Right cardiac atrium (tissue), 5 donors: ENCODE measurements at regions of chr1 and their contacts with region 1.

Region 1: GRCh38 chr1:64282354-64282753 is 78.9 kb downstream of the UBE2U start:
- DNase-seq: peak in 1 of 3 donors; percentile 54
- ATAC-seq: no peak
- H3K4me3 ChIP-seq: no peak overlapping the region
- H3K27ac ChIP-seq: no peak overlapping the region
- H3K4me1 ChIP-seq: no peaks in the 10 kb centered on the region
- H3K27me3 ChIP-seq: no peaks in the 10 kb centered on the region

Region 2: DNA sequence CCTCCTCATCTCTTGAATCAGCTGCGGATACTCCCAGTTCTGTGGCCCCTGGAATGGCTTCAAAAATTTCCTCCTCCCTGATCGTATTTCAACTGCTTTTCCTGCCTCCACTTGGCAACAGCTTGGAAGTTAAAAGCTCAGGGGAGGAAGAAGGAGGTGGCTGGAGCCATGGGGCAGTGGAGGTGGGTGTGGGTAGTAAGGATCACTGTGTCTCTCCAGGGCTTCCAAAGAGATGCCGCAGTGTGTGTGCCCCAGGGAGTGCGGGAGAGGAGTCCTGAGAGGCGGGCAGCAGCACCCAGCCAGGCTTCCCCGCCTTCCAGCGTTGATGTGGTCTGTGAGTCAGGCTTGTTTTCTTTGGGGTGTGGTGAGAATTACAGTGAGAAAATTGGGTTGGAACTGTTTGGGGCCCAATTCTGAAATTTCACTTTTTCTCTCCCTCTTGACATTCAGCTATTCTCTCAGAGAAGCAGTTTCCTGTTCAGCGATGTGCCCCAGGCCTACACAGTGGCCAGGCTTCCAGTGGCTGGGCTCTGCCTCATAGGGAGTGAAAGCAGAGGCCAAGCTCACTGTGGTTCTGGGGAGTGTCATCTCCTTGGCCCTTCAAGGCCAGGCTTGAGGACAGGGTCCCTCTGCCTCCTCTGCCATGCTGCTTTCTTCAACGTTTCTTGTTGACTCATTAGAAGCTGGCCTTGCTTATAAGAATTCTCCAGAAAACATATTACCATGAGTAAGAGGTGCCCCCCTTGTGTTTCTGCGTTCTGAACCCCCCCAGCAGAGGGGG is 620.1 kb before region 1 on chr1:
- intact Hi-C with region 1: no loop called
- DNase-seq: peak; percentile 44 to 76 (median 65)
- ATAC-seq: peak; percentile 66 to 74
- H3K4me3 ChIP-seq: no peak overlapping the region
- H3K27ac ChIP-seq: peak overlapping the region; percentile 9
- H3K4me1 ChIP-seq: no peaks in the 10 kb centered on the region
- H3K27me3 ChIP-seq: no peaks in the 10 kb centered on the region

Region 3: DNA sequence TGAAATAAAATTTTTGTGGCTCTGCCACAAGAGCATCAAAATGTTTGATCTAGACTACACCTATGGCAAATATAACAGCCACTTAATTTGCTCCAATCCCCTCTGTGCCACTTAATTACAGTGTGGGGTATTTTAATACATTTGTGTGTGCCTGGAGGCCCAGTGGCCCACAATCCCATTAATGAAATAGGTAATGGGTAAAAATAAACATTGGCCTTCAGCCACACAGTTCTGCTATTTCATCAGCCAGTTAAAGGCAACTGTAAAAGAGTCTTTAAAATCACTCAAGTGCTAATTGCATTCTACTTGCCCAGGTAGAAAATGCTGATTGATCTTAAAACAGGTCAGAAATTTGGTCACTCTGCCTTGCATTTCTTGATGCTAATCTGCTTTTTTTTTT is 230.6 kb before region 1 on chr1:
- intact Hi-C with region 1: no loop called
- DNase-seq: no peak
- ATAC-seq: peak in 1 of 2 donors; percentile 24
- H3K4me3 ChIP-seq: no peak overlapping the region
- H3K27ac ChIP-seq: no peak overlapping the region
- H3K4me1 ChIP-seq: no peaks in the 10 kb centered on the region
- H3K27me3 ChIP-seq: no peaks in the 10 kb centered on the region

Region 4: GRCh38 chr1:64663668-64664067 is 381.3 kb after region 1 on chr1:
- intact Hi-C with region 1: loop called in 1 of 4 experiments (anchors 10 kb)
- DNase-seq: peak in 2 of 3 donors; percentile 47 to 57
- ATAC-seq: peak in 1 of 2 donors; percentile 16
- H3K4me3 ChIP-seq: no peak overlapping the region
- H3K27ac ChIP-seq: no peak overlapping the region
- H3K4me1 ChIP-seq: no peaks in the 10 kb centered on the region
- H3K27me3 ChIP-seq: no peaks in the 10 kb centered on the region

Region 5: DNA sequence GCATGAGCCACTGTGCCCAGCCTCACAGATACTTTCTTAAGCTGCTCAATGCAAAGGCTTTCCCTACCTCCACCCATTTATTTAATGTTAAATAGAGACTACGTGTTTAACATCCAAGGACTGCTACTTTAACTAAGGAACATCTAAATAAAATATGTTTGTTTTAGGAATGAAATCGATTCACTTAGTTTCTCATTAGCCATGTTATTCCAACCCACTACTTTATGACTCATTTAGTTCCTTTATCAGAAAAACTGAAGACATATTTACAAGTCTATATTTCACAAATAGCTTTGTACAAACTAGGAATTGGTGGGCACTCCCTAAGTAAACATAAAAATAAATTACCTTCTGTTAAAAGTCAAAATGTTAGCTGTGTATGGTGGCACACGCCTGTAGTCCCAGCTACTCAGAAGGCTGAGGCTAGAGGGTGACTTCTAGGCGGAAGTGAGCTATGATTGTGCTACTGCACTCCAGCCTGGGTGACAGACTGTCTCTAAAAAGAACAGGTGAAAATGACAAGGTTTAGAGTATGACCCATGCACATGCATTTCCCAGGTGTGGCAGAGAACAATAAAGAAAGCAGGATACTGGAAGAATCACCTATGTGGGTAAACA is 825.8 kb after region 1 on chr1:
- intact Hi-C with region 1: no loop called
- DNase-seq: no peak
- ATAC-seq: no peak
- H3K4me3 ChIP-seq: no peak overlapping the region
- H3K27ac ChIP-seq: no peak overlapping the region
- H3K4me1 ChIP-seq: no peaks in the 10 kb centered on the region
- H3K27me3 ChIP-seq: no peaks in the 10 kb centered on the region